ENCODE measurements at regions of chr4 and their contacts with region 1.

Region 1: DNA sequence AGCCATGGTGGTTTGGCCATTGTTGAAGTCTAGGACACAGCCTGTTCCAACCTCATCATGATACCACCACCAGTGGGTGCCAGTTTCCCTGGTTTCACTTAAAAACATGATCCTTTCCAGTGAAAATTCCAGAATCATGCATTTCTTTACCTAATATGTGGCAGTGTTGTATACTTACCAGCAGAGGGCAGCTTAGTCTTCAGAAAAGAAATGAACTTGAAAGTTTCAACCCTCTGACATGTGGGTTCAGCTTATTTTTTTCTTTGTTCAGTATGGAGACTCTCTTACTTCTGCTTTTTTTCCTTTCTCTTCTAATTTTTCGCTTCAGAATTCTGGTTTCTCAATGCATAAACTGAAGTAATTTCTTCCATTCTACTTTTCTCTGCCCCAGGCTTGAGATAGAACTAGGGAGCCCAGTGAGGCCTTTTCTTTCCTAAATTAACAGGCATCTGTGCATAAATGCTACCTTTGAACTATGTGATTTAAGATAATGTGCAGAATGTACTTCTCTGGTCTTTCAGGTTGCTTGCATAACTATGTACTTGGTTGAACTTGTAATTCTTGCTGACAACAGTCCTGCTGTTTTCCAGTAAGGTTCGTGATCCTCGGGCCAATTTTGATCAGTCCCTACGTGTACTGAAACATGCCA is 10.7 kb downstream of the LIAS start:
- DNase-seq: peak; percentile 46 to 67 (median 48)
- ATAC-seq: peak; percentile 81
- H3K4me3 ChIP-seq: no peak overlapping the region
- H3K27ac ChIP-seq: no peak overlapping the region
- H3K4me1 ChIP-seq: no peaks in the 10 kb centered on the region; a peak in 2 of 5 replicates
- H3K27me3 ChIP-seq: no peaks in the 10 kb centered on the region
- CTCF ChIP-seq: peak; percentile 72 to 96 (median 86)
- EP300 ChIP-seq: peak; percentile 38; the same call in 1 of the 2 replicates
- POLR2A ChIP-seq: no peak
- RAD21 ChIP-seq: peak; percentile 88 to 92

Region 2: GRCh38 chr4:39527273-39528060 is 57.9 kb after region 1 on chr4 and contains the start of gene UGDH:
- CTCF ChIA-PET with region 1: interaction called, 3 read pairs
- POLR2A ChIA-PET with region 1: no interaction called
- in situ Hi-C with region 1: no loop called
- intact Hi-C with region 1: loop called (anchors 5 kb)
- DNase-seq: peak; percentile 97
- ATAC-seq: peak; percentile 99
- H3K4me3 ChIP-seq: peak within 1 kb of the TSS; percentile 81
- H3K27ac ChIP-seq: peak within 1 kb of the TSS; percentile 83
- H3K4me1 ChIP-seq: peaks cover 5 to 20% of the 10 kb centered on the region in 2 experiments; a peak in 4 of 5 replicates
- H3K27me3 ChIP-seq: no peaks in the 10 kb centered on the region
- CTCF ChIP-seq: peak in 1 of 3 experiments; percentile 8; a peak in 1 of 6 replicates
- EP300 ChIP-seq: peak; percentile 23; the same call in 1 of the 2 replicates
- POLR2A ChIP-seq: peak; percentile 93
- RAD21 ChIP-seq: no peak; a peak in 2 of 4 replicates
- polyA plus RNA-seq, gene UGDH: 5.5 to 6.8 TPM

Region 3: GRCh38 chr4:39638354-39639240 is 169.0 kb after region 1 on chr4 and contains the start of gene SMIM14:
- CTCF ChIA-PET with region 1: interaction called, 3 read pairs
- POLR2A ChIA-PET with region 1: interaction called, 5 read pairs
- in situ Hi-C with region 1: no loop called
- intact Hi-C with region 1: loop called (anchors 5 kb)
- DNase-seq: peak; percentile 97 to 98 (median 98)
- ATAC-seq: peak; percentile 95
- H3K4me3 ChIP-seq: peak within 1 kb of the TSS; percentile 90
- H3K27ac ChIP-seq: peak within 1 kb of the TSS; percentile 93
- H3K4me1 ChIP-seq: peaks cover 5 to 8% of the 10 kb centered on the region in 2 experiments; a peak in 3 of 5 replicates
- H3K27me3 ChIP-seq: no peaks in the 10 kb centered on the region
- CTCF ChIP-seq: peak in 1 of 3 experiments; percentile 14; a peak in 1 of 6 replicates
- EP300 ChIP-seq: peak; percentile 80
- POLR2A ChIP-seq: peak; percentile 88
- RAD21 ChIP-seq: no peak
- polyA plus RNA-seq, gene SMIM14: 3.0 to 3.7 TPM

Region 4: DNA sequence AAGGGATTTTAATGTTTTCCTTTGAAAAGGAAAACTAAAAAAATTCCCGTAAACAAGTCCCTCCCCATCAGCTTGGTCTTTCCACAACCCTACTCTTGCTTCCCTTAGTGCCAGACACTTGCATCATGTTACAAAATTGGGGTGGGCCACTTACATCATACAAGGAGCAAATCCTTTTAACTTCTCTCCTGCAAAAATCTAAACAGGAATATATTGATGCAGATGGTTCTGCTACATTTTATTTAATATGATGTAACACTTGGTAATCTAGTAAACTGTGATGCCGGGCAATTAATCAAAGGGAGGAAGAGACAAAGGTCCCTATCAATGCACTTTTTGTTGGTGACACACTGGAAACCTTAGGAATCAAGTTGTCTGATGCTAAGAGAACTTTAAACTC is 353.6 kb after region 1 on chr4:
- CTCF ChIA-PET with region 1: no interaction called
- POLR2A ChIA-PET with region 1: no interaction called
- in situ Hi-C with region 1: no loop called
- intact Hi-C with region 1: loop called (anchors 10 kb)
- DNase-seq: no peak
- ATAC-seq: peak; percentile 40
- H3K4me3 ChIP-seq: no peak overlapping the region
- H3K27ac ChIP-seq: no peak overlapping the region
- H3K4me1 ChIP-seq: no peaks in the 10 kb centered on the region; a peak in 3 of 5 replicates
- H3K27me3 ChIP-seq: no peaks in the 10 kb centered on the region
- CTCF ChIP-seq: no peak
- EP300 ChIP-seq: no peak
- POLR2A ChIP-seq: no peak
- RAD21 ChIP-seq: no peak

Region 5: DNA sequence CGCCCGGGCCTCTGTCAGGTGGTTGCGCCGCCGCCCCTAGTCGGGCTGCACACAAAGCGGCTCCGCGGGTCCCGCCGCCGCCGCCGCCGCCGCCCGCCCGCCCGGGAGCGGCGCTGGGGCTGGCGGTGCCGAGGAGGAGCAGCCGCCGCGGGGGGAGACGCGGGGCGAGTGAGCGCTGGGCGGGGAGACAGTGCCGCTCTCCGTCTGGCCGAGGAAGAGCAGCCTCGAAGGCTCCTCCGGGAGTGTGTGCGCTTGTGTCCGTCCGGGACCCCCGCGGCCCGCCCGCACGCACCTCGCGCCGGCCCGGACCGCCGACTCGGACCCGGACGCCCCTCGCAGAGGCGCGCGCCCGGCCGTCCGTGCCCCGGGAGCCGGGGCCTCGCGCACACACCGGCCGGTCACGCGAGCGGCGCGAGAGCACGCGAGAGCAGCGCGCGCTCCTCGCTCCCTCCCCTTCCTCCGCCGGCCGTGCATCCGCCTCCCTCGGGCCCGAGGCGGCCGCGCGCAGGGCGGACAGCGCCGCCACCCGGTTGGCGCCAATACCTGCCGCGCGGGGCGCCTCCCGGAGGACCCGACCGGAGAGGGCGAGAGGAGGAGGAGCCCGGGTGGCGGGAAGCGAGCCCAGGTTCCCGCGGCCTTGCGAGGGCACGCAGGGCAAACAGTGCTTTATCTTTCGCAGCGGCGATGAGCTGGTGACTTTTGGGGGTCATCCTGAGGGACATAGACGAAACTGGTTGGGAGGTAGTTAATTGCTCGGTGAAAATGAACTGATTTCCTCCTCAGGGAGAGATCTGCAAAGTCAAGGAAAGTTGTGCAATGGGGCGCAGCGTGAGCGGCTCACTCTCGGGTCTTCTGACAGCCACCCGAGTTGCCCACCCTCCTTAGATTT is 508.2 kb after region 1 on chr4 and contains the start of gene PDS5A:
- CTCF ChIA-PET with region 1: interaction called, 66 read pairs
- POLR2A ChIA-PET with region 1: interaction called, 3 read pairs
- in situ Hi-C with region 1: loop called (anchors 5 kb)
- intact Hi-C with region 1: loop called (anchors 1 kb)
- DNase-seq: peak; percentile 93 to 96 (median 94)
- ATAC-seq: peak; percentile 89
- H3K4me3 ChIP-seq: peak within 1 kb of the TSS; percentile 92
- H3K27ac ChIP-seq: peak within 1 kb of the TSS; percentile 83
- H3K4me1 ChIP-seq: peaks cover 10 to 16% of the 10 kb centered on the region in 2 experiments; a peak in 4 of 5 replicates
- H3K27me3 ChIP-seq: no peaks in the 10 kb centered on the region
- CTCF ChIP-seq: peak; percentile 89 to 99 (median 98)
- EP300 ChIP-seq: 0 out of 2 replicates have a peak, but pooled peaks have one; percentile 17
- POLR2A ChIP-seq: peak; percentile 68
- RAD21 ChIP-seq: peak; percentile 60 to 65
- polyA plus RNA-seq, gene PDS5A: 16.4 to 20.6 TPM

Measured in K562 (cell line).